IMR-90 (cell line): ENCODE measurements at regions of chr15 and their contacts with region 1.

Region 1: DNA sequence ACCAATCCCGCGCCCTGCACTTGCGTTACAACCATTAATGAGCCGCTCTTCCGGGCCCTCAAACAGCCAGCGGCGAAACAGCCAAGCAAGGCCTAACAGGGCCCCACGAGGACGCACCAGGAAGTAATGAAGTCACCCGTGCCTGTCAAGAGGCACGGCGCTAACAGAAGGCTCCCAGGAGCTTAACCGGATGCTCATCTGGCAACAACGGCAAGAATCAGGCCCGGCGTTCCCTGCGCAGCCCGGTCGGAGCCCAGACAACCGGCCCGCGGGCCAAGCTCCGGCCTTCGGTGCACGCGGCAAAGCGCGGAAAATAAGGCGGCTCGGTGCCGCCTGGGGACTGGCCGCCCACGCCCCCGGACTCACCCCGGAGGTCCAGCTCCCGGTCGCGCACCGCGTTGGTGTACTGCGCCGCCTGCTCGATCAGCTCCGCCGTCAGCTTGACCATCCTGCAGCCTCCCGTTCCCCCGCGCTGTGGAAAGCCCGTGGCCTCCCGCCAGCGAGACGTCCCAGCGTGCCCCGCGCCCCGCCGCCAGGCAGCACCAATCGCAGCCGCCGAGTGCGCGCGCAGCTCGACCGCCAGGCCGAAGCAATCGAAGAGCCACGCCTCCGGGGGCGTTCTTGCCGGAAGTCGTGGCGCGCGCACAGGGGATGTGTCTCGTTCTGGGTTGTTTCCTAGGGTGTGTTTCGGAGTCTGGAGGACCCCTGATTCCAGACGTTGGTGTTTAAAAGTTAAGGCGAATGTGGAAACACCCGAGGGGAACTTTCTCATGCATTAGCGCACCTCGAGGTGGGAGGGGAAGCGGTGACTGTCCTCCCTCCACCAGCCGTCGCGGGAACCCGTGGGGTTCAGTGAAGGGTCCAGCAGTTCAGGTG is at the start of gene SNRPA1:
- DNase-seq: peak; percentile 94
- ATAC-seq: peak; percentile 87
- H3K4me3 ChIP-seq: peak within 1 kb of the TSS; percentile 71
- H3K27ac ChIP-seq: peak within 1 kb of the TSS; percentile 89
- H3K4me1 ChIP-seq: peaks cover 6% of the 10 kb centered on the region
- H3K27me3 ChIP-seq: no peaks in the 10 kb centered on the region
- CTCF ChIP-seq: no peak
- POLR2A ChIP-seq: peak; percentile 81
- RAD21 ChIP-seq: no peak
- total RNA-seq, gene SNRPA1: 37.1 and 47.5 TPM in 2 replicates

Region 2: GRCh38 chr15:100687582-100688141 is 607.3 kb before region 1 on chr15:
- CTCF ChIA-PET with region 1: no interaction called
- POLR2A ChIA-PET with region 1: no interaction called
- dilution Hi-C with region 1: no loop called
- in situ Hi-C with region 1: no loop called
- intact Hi-C with region 1: no loop called
- DNase-seq: peak; percentile 86
- ATAC-seq: peak; percentile 78
- H3K4me3 ChIP-seq: no peak overlapping the region
- H3K27ac ChIP-seq: peak overlapping the region; percentile 10; the same call in 1 of the 2 replicates
- H3K4me1 ChIP-seq: peaks cover 14% of the 10 kb centered on the region
- H3K27me3 ChIP-seq: no peaks in the 10 kb centered on the region; the same call in none of the 2 replicates
- CTCF ChIP-seq: no peak
- POLR2A ChIP-seq: no peak
- RAD21 ChIP-seq: no peak

Region 3: DNA sequence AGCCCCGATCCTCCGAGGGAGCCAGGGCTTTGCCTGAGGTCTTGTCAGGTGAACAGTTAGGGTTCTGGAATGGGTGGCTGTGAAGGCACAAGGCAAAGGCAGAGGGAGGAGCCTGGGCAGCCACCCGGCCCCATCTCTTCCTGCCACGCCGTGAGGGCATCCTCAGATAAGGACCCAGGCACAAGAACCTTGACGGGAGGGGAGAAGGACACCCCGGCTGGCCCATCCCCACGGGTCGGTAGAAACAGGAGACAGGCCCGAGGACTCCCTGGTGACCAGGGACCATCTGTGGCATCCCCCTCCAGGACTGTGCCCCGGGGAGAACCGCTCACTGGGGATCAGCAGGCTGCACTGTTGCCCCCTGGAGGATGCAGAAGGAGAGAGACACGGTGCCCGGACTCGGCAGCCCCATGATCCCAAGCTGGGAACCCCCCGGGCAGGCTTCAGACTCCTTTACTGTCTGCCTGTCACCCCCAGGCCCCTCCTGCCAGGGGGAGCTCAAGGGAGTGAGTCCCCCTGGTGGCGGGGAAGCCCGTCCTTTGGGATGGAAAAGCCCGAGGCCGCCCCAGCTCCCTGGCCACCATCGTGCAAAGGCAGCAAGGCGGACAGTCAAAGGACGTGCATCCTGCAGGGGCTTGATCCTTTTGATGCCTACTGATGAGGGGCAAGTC is 206.9 kb after region 1 on chr15:
- CTCF ChIA-PET with region 1: no interaction called
- POLR2A ChIA-PET with region 1: no interaction called
- dilution Hi-C with region 1: no loop called
- in situ Hi-C with region 1: no loop called
- intact Hi-C with region 1: loop called (anchors 1 kb)
- DNase-seq: no peak
- ATAC-seq: peak; percentile 62
- H3K4me3 ChIP-seq: no peak overlapping the region
- H3K27ac ChIP-seq: no peak overlapping the region
- H3K4me1 ChIP-seq: peaks cover 2% of the 10 kb centered on the region; the same call in 1 of the 2 replicates
- H3K27me3 ChIP-seq: peaks cover 45% of the 10 kb centered on the region
- CTCF ChIP-seq: peak; percentile 25; the same call in 1 of the 2 replicates
- POLR2A ChIP-seq: no peak
- RAD21 ChIP-seq: no peak

Region 4: DNA sequence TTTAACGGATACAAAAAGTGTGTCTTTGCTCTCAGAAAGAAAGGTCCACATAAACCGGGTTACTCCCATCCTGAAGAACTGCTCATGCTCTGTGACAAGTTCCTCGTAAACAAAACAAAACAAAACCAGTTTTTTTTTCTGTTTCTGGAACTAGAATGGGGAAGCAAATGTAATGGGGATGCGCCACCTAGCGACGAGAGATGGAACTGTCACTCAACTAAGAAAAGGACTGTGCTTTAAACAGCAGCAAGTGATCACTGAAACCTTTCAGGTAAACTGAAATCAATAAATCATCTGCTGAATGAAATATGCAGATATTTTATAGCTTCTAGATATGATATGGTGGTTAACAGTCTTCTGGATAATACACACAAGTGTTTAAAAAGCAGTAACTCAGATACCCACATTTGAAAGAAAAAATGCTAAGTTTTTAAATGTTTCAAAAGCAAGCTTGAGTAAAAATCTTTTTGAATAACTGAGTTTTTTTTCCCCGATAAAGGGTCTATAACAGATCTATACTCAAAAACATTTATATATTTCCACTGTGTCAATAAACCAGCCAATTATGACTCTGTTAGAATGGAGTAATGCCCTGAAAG is 346.3 kb after region 1 on chr15:
- CTCF ChIA-PET with region 1: interaction called, 5 read pairs
- POLR2A ChIA-PET with region 1: no interaction called
- dilution Hi-C with region 1: no loop called
- in situ Hi-C with region 1: loop called (anchors 5 kb)
- intact Hi-C with region 1: loop called (anchors 1 kb)
- DNase-seq: peak; percentile 73
- ATAC-seq: peak; percentile 76
- H3K4me3 ChIP-seq: no peak overlapping the region
- H3K27ac ChIP-seq: no peak overlapping the region
- H3K4me1 ChIP-seq: peaks cover 3% of the 10 kb centered on the region
- H3K27me3 ChIP-seq: no peaks in the 10 kb centered on the region
- CTCF ChIP-seq: peak; percentile 98
- POLR2A ChIP-seq: no peak
- RAD21 ChIP-seq: peak; percentile 92